ENCODE measurements at regions of chr3 and their contacts with region 1.

Region 1: DNA sequence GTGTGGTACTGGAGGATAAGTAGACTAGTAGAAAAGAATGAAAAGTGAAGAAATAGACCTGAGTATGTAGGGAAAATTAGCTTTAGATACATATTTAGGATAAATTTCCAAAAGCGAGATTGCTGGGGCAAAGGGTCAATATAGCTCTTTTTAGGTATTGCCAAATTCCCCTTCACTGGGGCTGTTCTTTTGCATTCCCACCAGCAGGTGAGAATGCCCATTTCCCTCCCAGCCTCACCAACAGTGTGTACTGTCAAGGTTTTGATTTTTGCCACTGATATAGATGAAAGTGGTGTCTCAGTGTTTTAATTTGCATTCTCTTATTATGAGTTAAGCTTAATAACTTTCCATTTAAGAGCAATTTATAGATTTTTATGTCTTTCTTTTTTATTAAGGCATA is 35.7 kb upstream of the BHLHE40 start:
- DNase-seq: no peak
- H3K4me3 ChIP-seq: no peak overlapping the region
- H3K27ac ChIP-seq: no peak overlapping the region
- H3K4me1 ChIP-seq: peaks cover 0 to 2% (median 0%) of the 10 kb centered on the region in 4 experiments; a peak in 1 of 7 replicates
- H3K27me3 ChIP-seq: no peaks in the 10 kb centered on the region
- CTCF ChIP-seq: peak; percentile 36 to 61 (median 37)
- EP300 ChIP-seq: no peak
- POLR2A ChIP-seq: no peak
- RAD21 ChIP-seq: peak; percentile 14 to 25; a peak in 2 of 4 replicates

Region 2: DNA sequence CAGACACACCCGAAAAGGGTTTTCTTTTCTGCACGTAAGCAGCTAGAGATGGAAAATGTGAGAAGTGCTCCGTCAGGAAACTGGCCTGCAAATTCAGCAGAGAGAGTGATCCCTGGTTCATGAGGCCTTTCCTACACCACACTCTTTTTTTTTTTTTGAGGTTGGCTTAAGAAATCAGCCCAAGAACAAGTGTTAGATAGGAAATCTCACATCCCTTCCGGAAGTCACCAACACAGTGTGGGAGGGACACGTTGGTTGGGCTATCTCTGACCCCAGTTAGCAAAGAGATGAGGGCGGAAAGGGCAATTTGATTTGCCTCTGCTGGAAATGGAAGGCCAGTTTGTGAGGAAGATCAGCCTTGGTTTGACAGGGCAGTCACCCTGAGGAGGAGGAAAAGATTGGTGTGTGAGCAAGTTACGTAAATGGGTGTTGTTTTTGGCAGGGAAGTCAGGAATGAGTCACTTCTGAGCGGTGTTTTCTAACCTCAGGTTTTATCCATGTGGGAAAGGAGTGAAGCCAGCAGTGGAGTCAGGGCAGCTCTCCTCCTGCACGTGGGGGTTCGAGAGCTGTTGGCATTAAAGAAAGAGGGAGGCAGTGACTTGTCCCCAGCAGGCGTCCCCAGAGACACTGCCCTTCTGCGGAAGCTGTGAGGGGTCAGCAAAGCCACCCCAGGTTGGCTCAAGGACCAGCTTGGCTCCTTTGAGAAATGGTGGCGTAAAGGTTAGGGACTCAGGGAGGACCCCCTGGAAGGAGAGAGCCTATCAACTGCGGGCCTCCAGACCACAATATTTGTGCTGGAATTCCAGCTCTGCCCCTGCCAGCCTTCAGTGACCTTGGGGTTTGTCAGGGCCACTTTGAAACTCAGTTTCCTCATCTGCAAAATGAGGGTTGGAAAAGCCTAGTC is 201.9 kb before region 1 on chr3:
- CTCF ChIA-PET with region 1: no interaction called
- POLR2A ChIA-PET with region 1: no interaction called
- DNase-seq: no peak
- H3K4me3 ChIP-seq: no peak overlapping the region
- H3K27ac ChIP-seq: no peak overlapping the region
- H3K4me1 ChIP-seq: no peaks in the 10 kb centered on the region
- H3K27me3 ChIP-seq: no peaks in the 10 kb centered on the region
- CTCF ChIP-seq: no peak
- EP300 ChIP-seq: no peak
- POLR2A ChIP-seq: no peak
- RAD21 ChIP-seq: no peak

Region 3: DNA sequence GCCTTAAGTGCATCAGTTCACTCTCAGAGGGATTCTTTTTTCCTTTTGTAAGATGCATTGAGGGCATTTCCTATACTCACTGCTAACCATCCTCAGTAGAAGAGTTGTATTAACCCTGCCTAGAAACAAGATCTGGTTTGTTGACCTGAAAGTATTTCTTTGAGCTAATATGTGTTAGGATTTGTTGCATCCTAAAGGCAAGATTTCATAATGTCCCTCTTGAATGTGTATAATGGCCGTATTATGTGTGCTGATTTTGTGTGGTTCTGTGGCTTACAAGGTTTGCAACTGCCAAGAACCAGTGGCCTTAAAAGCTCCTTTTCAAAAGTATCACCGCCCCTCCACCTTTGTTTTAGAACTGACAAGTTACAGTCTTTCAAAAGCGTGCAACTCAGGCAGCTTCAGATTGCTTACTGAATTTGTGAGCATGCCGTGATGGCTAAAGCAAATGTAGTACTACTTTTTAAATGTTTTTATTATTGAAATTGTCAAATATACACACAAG is 146.3 kb before region 1 on chr3:
- CTCF ChIA-PET with region 1: no interaction called
- POLR2A ChIA-PET with region 1: no interaction called
- DNase-seq: no peak
- H3K4me3 ChIP-seq: no peak overlapping the region; a peak in 1 of 8 replicates
- H3K27ac ChIP-seq: no peak overlapping the region
- H3K4me1 ChIP-seq: no peaks in the 10 kb centered on the region
- H3K27me3 ChIP-seq: no peaks in the 10 kb centered on the region
- CTCF ChIP-seq: no peak
- EP300 ChIP-seq: no peak
- POLR2A ChIP-seq: no peak
- RAD21 ChIP-seq: no peak

Region 4: GRCh38 chr3:4834403-4834866 is 109.1 kb before region 1 on chr3:
- CTCF ChIA-PET with region 1: no interaction called
- POLR2A ChIA-PET with region 1: no interaction called
- DNase-seq: no peak
- H3K4me3 ChIP-seq: no peak overlapping the region
- H3K27ac ChIP-seq: no peak overlapping the region
- H3K4me1 ChIP-seq: no peaks in the 10 kb centered on the region
- H3K27me3 ChIP-seq: no peaks in the 10 kb centered on the region
- CTCF ChIP-seq: no peak
- EP300 ChIP-seq: no peak
- POLR2A ChIP-seq: no peak
- RAD21 ChIP-seq: no peak

Region 5: DNA sequence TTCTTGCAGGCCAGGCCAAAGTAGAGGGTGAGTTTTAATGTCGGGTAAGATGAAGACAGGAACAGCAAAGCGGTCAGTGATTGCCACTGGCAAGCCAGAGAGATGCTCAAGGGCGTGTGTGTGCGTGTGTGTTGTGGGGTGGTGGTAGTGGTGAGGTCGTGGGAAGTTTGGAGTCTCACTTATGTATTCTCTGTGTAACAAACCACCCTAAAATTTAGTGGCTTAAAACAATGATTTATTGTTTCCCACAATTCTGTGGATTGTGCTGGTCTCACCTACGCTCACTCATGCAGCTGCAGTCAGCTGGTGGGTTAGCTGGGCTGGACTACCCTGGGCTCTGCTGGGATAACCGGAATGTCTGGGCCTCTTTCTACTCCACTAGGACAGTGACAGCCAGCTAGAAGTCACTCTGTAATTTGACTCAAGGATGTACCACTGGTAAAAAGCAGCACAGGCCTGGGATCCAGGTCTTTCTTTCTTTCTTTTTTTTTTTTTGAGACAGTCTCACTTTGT is 15.2 kb before region 1 on chr3:
- CTCF ChIA-PET with region 1: interaction called, 11 read pairs
- POLR2A ChIA-PET with region 1: no interaction called
- DNase-seq: no peak
- H3K4me3 ChIP-seq: no peak overlapping the region
- H3K27ac ChIP-seq: no peak overlapping the region
- H3K4me1 ChIP-seq: no peaks in the 10 kb centered on the region
- H3K27me3 ChIP-seq: no peaks in the 10 kb centered on the region
- CTCF ChIP-seq: no peak
- EP300 ChIP-seq: no peak
- POLR2A ChIP-seq: no peak
- RAD21 ChIP-seq: no peak

Region 6: DNA sequence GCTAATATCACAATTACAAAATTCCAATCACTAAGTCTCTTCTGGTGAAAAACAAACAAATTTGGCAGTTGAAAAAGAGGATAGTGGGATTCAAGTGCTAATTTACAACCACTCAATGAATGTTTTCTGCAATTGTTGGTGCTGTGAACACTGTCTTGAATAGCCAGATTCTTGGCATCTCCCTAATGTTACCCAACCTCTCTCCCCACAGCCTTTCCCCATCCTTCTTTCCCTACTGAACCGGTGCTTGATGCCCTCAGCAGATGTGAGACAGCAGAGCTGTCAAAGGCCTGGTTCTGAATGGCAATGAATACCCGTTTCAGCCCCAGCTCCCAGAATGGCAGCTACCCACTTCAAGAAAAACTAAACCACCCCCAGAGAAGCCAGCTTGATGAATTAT is 13.2 kb after region 1 on chr3:
- CTCF ChIA-PET with region 1: interaction called, 19 read pairs
- POLR2A ChIA-PET with region 1: no interaction called
- DNase-seq: no peak
- H3K4me3 ChIP-seq: no peak overlapping the region
- H3K27ac ChIP-seq: no peak overlapping the region
- H3K4me1 ChIP-seq: no peaks in the 10 kb centered on the region
- H3K27me3 ChIP-seq: no peaks in the 10 kb centered on the region
- CTCF ChIP-seq: no peak
- EP300 ChIP-seq: no peak
- POLR2A ChIP-seq: no peak
- RAD21 ChIP-seq: no peak

Region 7: GRCh38 chr3:5022187-5022965 is 78.8 kb after region 1 on chr3:
- CTCF ChIA-PET with region 1: no interaction called
- POLR2A ChIA-PET with region 1: no interaction called
- DNase-seq: no peak
- H3K4me3 ChIP-seq: no peak overlapping the region
- H3K27ac ChIP-seq: no peak overlapping the region
- H3K4me1 ChIP-seq: peaks cover 0 to 5% (median 1%) of the 10 kb centered on the region in 4 experiments; a peak in 2 of 7 replicates
- H3K27me3 ChIP-seq: no peaks in the 10 kb centered on the region
- CTCF ChIP-seq: no peak
- EP300 ChIP-seq: no peak
- POLR2A ChIP-seq: no peak
- RAD21 ChIP-seq: no peak